Dorsolateral prefrontal cortex (tissue), 120 donors: ENCODE measurements at regions of chr11 and their contacts with region 1.

Region 1: DNA sequence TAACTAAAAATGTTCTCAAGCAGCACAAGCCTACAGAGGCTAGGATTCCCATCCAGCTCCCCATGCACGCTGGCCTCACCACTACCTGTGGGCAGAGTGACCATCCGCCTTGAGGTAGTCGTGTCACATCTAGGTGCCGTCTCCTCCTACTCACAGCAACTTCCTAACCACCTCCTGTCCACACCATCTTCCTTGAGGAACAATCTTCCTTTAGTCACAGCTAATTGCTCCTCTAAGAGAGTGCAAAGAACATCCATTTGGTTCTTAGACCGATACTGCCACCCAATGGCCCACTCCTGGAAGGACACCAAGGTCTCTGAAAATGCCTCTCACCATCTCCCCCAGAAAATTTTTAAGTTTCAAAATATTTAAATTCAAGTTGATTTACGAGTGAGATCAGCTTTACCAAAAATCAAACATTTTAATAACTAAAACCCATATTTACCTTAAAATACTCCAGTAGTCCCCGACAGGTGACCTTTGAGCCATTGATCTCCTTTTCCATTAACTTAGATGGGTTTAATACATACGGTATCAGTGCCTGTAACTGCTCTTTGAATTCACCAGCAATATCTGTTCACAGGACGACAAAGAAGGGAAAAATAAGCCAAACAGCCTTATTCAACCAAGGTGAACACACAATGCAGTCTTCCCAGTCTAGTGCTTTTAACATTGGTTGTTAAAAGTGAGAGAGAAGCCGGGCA is 21.7 kb upstream of the PLAAT3 start:
- DNase-seq: peak; percentile 54 to 84 (median 70)
- H3K4me3 ChIP-seq: no peak overlapping the region
- H3K27ac ChIP-seq: peak overlapping the region in 44 of 59 donors; percentile 4 to 86 (median 62)
- H3K27me3 ChIP-seq: no peaks in the 10 kb centered on the region
- CTCF ChIP-seq: peak; percentile 51 to 98 (median 90)

Region 2: GRCh38 chr11:62905927-62906531 is 729.9 kb before region 1 on chr11:
- intact Hi-C with region 1: loop called in 1 of 2 experiments (anchors 5 kb)
- DNase-seq: peak; percentile 68 to 89 (median 85)
- H3K4me3 ChIP-seq: no peak overlapping the region
- H3K27ac ChIP-seq: peak overlapping the region in 50 of 59 donors; percentile 0 to 82 (median 50)
- H3K27me3 ChIP-seq: no peaks in the 10 kb centered on the region
- CTCF ChIP-seq: peak; percentile 87 to 100 (median 98)

Region 3: GRCh38 chr11:63023841-63024648 is 611.9 kb before region 1 on chr11:
- intact Hi-C with region 1: loop called in 1 of 2 experiments (anchors 10 kb)
- DNase-seq: peak; percentile 83 to 96 (median 92)
- H3K4me3 ChIP-seq: peak overlapping the region in 16 of 59 donors; percentile 4 to 35 (median 16)
- H3K27ac ChIP-seq: peak overlapping the region in 57 of 59 donors; percentile 3 to 92 (median 75)
- H3K27me3 ChIP-seq: no peaks in the 10 kb centered on the region
- CTCF ChIP-seq: peak in 55 of 56 donors; percentile 99 to 100 (median 100)

Region 4: DNA sequence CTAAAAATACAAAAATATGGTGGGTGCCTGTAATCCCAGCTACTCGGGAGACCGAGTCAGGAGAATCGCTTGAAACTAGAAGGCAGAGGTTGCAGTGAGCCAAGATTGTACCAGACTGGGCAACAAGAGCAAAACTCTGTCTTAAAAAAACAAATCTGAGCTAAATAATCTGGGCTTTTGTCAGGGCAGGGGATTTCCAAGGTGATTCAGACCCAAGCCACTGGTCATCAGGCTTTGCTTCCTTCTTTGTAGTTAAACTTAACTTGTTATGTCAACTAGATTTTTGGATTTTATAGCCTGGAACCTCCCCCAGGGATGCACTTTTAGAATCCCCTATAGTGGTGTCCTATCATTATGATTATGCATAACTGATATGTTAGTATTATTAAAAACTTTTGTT is 593.3 kb before region 1 on chr11:
- intact Hi-C with region 1: loop called in 1 of 2 experiments (anchors 5 kb)
- DNase-seq: no peak
- H3K4me3 ChIP-seq: no peak overlapping the region
- H3K27ac ChIP-seq: no peak overlapping the region
- H3K27me3 ChIP-seq: no peaks in the 10 kb centered on the region
- CTCF ChIP-seq: no peak

Region 5: GRCh38 chr11:63478896-63479295 is 157.0 kb before region 1 on chr11:
- intact Hi-C with region 1: loop called (anchors 1 to 5 kb)
- DNase-seq: peak in 7 of 10 donors; percentile 24 to 77 (median 49)
- H3K4me3 ChIP-seq: peak overlapping the region in 13 of 59 donors; percentile 7 to 37 (median 20)
- H3K27ac ChIP-seq: peak overlapping the region in 52 of 59 donors; percentile 1 to 88 (median 66)
- H3K27me3 ChIP-seq: no peaks in the 10 kb centered on the region
- CTCF ChIP-seq: peak; percentile 79 to 99 (median 94)